CD8-positive, alpha-beta T cell (primary cell): ENCODE measurements at regions of chr15 and their contacts with region 1.

Region 1: GRCh38 chr15:45198337-45199135 is 10.8 kb upstream of the SHF start:
- DNase-seq: peak; percentile 90 to 99 (median 93)
- ATAC-seq: peak; percentile 61
- H3K4me3 ChIP-seq: peak overlapping the region; percentile 82 to 88
- H3K4me3 Mint-ChIP-seq: no peak overlapping the region
- H3K27ac ChIP-seq: peak overlapping the region; percentile 92 to 96
- H3K27ac Mint-ChIP-seq: no peak overlapping the region
- H3K4me1 ChIP-seq: peaks cover 11% of the 10 kb centered on the region
- H3K4me1 Mint-ChIP-seq: peaks cover 13% of the 10 kb centered on the region
- H3K27me3 ChIP-seq: no peaks in the 10 kb centered on the region
- H3K27me3 Mint-ChIP-seq: no peaks in the 10 kb centered on the region
- CTCF ChIP-seq: peak; percentile 54

Region 2: DNA sequence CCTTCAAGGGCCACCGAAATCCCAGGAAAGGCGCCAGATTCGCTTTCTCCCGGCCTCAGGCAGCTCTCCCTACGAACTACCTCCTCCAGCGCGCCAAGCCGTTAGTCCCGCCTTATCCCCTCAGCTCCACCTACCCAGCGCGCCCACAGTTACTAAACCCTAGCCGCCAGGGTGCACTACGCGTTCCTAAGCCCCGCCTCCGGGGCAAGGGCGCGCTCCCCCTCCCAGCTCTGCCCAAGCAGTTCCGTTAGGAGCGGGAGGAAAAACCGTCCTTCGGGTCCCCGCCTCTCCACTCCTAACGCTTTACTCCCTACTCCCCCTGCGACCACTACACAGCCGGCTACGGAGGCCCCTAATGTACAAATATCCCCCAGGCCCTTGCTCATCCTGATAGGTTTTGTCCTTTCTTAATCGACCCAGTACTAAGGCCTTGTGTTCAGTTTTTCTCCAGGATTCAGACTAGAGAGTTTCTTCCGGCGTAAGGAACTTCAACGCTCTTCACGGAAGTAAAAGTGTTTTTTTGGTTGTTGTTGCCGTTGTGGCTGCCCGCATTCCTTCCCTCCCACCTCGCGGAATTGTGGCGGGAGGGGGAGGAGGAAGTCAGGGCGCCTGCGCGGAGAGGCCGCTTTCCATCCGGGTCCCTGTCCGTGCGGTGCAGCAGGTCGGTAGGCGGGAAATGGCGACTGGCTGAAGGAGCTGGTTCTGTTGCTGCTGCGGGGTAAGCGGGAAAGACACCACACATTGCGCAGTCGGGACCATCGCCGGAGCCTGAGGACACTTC is 771.4 kb before region 1 on chr15 and contains the start of gene CTDSPL2:
- CTCF ChIA-PET with region 1: no interaction called
- POLR2A ChIA-PET with region 1: no interaction called
- intact Hi-C with region 1: loop called in 1 of 2 experiments (anchors 5 kb)
- DNase-seq: peak; percentile 88 to 97 (median 93)
- ATAC-seq: peak; percentile 95
- H3K4me3 ChIP-seq: peak within 1 kb of the TSS; percentile 61 to 83
- H3K4me3 Mint-ChIP-seq: peak within 1 kb of the TSS; percentile 98
- H3K27ac ChIP-seq: peak within 1 kb of the TSS; percentile 86
- H3K27ac Mint-ChIP-seq: peak within 1 kb of the TSS; percentile 98
- H3K4me1 ChIP-seq: peaks cover 25% of the 10 kb centered on the region
- H3K4me1 Mint-ChIP-seq: peaks cover 46% of the 10 kb centered on the region
- H3K27me3 ChIP-seq: no peaks in the 10 kb centered on the region
- H3K27me3 Mint-ChIP-seq: no peaks in the 10 kb centered on the region
- CTCF ChIP-seq: no peak
- total RNA-seq, gene CTDSPL2: 103 to 104 TPM

Region 3: GRCh38 chr15:45126535-45127158 is 71.9 kb before region 1 on chr15:
- CTCF ChIA-PET with region 1: interaction called, 3 read pairs
- POLR2A ChIA-PET with region 1: no interaction called
- intact Hi-C with region 1: loop called in 1 of 2 experiments (anchors 5 kb)
- DNase-seq: peak in 5 of 9 experiments; percentile 36 to 68 (median 52)
- ATAC-seq: peak; percentile 60
- H3K4me3 ChIP-seq: no peak overlapping the region
- H3K4me3 Mint-ChIP-seq: no peak overlapping the region
- H3K27ac ChIP-seq: no peak overlapping the region
- H3K27ac Mint-ChIP-seq: no peak overlapping the region
- H3K4me1 ChIP-seq: no peaks in the 10 kb centered on the region
- H3K4me1 Mint-ChIP-seq: peaks cover 5% of the 10 kb centered on the region
- H3K27me3 ChIP-seq: peaks cover 9 to 28% of the 10 kb centered on the region in 2 experiments
- H3K27me3 Mint-ChIP-seq: peaks cover 64% of the 10 kb centered on the region
- CTCF ChIP-seq: peak; percentile 59

Region 4: DNA sequence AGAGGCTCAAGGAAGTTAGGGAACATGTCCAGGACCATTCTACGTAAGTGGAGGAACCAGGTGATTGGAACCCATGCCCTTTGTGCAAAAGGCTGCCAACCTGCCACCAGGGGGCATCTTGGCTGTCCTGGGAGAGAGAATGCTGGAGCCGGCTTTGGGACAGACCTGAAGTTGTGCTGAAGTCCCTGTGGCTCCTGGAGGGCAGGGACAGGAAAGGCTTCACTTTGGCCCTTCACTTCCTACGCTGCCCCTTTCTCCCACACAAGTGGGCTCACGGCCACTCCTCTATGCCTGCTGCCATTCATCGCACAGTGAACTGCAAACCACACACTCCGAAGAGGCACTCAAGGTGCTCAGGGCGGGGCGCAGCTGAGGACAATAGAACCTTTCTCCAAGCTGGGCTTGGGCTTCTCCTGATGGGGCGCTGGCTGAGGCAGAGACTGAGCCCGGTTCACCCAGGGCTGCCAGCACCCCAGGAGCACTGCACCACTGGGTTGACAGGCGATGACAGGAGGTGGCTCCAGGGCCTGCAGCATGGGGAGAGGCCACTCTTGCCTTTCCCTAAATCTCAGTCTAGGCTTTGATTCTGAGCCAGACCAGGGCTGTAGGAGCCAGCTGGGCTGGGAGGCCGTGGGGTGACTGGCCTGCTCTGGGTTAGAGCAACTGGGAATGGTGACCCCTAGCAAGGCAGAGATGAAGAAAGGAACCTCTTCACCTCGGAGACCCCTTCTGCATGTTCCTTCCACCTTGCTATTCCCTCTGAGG is 19.1 kb before region 1 on chr15:
- CTCF ChIA-PET with region 1: interaction called, 34 read pairs
- POLR2A ChIA-PET with region 1: interaction called, 9 read pairs
- intact Hi-C with region 1: no loop called
- DNase-seq: peak in 8 of 9 experiments; percentile 37 to 71 (median 59)
- ATAC-seq: peak; percentile 67
- H3K4me3 ChIP-seq: no peak overlapping the region
- H3K4me3 Mint-ChIP-seq: no peak overlapping the region
- H3K27ac ChIP-seq: no peak overlapping the region
- H3K27ac Mint-ChIP-seq: no peak overlapping the region
- H3K4me1 ChIP-seq: no peaks in the 10 kb centered on the region
- H3K4me1 Mint-ChIP-seq: peaks cover 15% of the 10 kb centered on the region
- H3K27me3 ChIP-seq: no peaks in the 10 kb centered on the region
- H3K27me3 Mint-ChIP-seq: no peaks in the 10 kb centered on the region
- CTCF ChIP-seq: peak; percentile 46

Region 5: DNA sequence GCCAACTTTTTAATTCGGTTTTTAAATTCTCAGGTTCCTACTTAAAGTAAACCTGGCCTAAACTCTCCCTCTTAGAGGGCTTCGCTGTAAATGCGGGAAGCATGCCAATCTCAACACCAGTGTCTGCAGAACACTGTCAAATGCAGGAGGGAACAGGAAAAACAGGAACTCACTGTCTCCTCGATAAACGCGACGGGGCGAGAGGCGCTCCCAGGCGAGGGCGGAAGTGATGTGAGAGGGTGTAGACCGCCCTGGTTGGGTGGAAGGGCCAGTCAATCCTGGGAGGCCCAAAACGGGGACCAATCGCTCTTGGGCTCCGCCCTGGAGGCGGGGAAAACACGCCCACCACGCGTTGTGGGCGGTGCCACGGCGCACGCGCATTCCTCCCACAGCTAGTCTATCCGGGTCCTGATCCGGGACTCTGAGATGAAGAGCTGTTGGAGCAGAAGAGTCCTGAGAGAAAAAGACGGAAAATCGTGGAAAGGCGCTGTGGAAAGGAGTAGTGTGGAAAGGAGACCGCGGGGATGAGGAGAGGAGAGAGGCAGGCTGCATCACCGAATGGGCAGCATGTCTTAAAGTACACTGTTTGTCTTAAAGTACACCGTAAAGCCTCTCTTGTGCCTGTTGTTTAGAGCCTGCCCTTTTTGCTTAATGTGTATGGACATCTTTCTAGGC is 80.6 kb after region 1 on chr15:
- CTCF ChIA-PET with region 1: interaction called, 5 read pairs
- POLR2A ChIA-PET with region 1: interaction called, 9 read pairs
- intact Hi-C with region 1: loop called (anchors 1 kb)
- DNase-seq: peak; percentile 95 to 99 (median 97)
- ATAC-seq: peak; percentile 99
- H3K4me3 ChIP-seq: peak overlapping the region; percentile 61 to 69
- H3K4me3 Mint-ChIP-seq: peak overlapping the region; percentile 91
- H3K27ac ChIP-seq: peak overlapping the region; percentile 66 to 85
- H3K27ac Mint-ChIP-seq: peak overlapping the region; percentile 94
- H3K4me1 ChIP-seq: peaks cover 15% of the 10 kb centered on the region
- H3K4me1 Mint-ChIP-seq: peaks cover 22% of the 10 kb centered on the region
- H3K27me3 ChIP-seq: no peaks in the 10 kb centered on the region
- H3K27me3 Mint-ChIP-seq: peaks cover 1% of the 10 kb centered on the region
- CTCF ChIP-seq: no peak

Region 6: GRCh38 chr15:45522328-45523160 is 324.0 kb after region 1 on chr15 and contains the start of gene SLC30A4:
- CTCF ChIA-PET with region 1: no interaction called
- POLR2A ChIA-PET with region 1: no interaction called
- intact Hi-C with region 1: loop called in 1 of 2 experiments (anchors 2 kb)
- DNase-seq: peak; percentile 16 to 87 (median 66)
- ATAC-seq: peak; percentile 85
- H3K4me3 ChIP-seq: peak within 1 kb of the TSS; percentile 71 to 85
- H3K4me3 Mint-ChIP-seq: peak within 1 kb of the TSS; percentile 94
- H3K27ac ChIP-seq: peak within 1 kb of the TSS; percentile 31 to 63
- H3K27ac Mint-ChIP-seq: peak within 1 kb of the TSS; percentile 88
- H3K4me1 ChIP-seq: peaks cover 10% of the 10 kb centered on the region
- H3K4me1 Mint-ChIP-seq: peaks cover 32% of the 10 kb centered on the region
- H3K27me3 ChIP-seq: no peaks in the 10 kb centered on the region
- H3K27me3 Mint-ChIP-seq: no peaks in the 10 kb centered on the region
- CTCF ChIP-seq: peak; percentile 67
- total RNA-seq, gene SLC30A4: 1.8 to 2.0 TPM

Region 7: DNA sequence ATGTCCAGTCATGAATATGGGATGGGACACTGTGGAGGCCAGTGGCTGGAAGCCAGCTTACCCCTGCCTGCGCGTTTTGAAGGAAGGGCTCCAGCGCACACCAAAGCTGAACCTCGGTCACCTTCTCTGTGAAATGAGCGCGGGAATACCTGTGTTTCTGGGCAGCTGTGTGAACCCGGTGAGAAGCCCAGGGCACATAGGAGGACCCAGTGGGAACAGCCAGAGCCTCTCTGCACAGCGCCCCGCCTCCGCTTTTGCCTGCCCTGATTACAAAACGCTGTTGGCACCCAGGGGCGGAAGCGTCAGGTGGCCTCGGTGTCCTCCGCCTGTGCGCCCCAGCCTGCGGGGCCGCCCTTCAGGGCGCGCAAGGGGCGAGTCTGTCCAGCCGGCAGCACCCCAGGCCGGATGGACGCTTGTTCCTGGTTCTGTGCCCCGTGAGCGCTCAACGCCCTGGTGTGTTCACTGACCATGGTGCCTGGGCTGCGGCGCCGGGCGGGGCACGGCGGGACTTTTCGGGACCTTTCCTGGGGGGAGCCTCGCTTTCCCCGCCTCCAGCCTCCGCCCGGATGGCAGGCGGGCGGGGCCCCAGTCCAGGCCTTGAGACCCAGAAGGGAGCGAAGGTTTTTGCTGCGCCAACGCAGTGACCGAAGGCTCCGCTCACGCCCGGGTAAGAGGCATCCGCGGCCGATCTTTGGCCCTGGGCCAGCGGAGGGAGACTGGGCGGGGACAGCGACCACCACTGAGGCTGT is 436.1 kb after region 1 on chr15 and contains the start of gene SQOR:
- CTCF ChIA-PET with region 1: no interaction called
- POLR2A ChIA-PET with region 1: no interaction called
- intact Hi-C with region 1: loop called in 1 of 2 experiments (anchors 10 kb)
- DNase-seq: peak; percentile 25 to 83 (median 67)
- ATAC-seq: peak; percentile 57
- H3K4me3 ChIP-seq: peak within 1 kb of the TSS; percentile 67 to 96
- H3K4me3 Mint-ChIP-seq: peak within 1 kb of the TSS; percentile 97
- H3K27ac ChIP-seq: peak within 1 kb of the TSS; percentile 72 to 78
- H3K27ac Mint-ChIP-seq: peak within 1 kb of the TSS; percentile 94
- H3K4me1 ChIP-seq: peaks cover 34% of the 10 kb centered on the region
- H3K4me1 Mint-ChIP-seq: peaks cover 43% of the 10 kb centered on the region
- H3K27me3 ChIP-seq: no peaks in the 10 kb centered on the region
- H3K27me3 Mint-ChIP-seq: no peaks in the 10 kb centered on the region
- CTCF ChIP-seq: no peak
- total RNA-seq, gene SQOR: 11.8 to 14.4 TPM